ENCODE measurements at regions of chr11 and their contacts with region 1.

Region 1: DNA sequence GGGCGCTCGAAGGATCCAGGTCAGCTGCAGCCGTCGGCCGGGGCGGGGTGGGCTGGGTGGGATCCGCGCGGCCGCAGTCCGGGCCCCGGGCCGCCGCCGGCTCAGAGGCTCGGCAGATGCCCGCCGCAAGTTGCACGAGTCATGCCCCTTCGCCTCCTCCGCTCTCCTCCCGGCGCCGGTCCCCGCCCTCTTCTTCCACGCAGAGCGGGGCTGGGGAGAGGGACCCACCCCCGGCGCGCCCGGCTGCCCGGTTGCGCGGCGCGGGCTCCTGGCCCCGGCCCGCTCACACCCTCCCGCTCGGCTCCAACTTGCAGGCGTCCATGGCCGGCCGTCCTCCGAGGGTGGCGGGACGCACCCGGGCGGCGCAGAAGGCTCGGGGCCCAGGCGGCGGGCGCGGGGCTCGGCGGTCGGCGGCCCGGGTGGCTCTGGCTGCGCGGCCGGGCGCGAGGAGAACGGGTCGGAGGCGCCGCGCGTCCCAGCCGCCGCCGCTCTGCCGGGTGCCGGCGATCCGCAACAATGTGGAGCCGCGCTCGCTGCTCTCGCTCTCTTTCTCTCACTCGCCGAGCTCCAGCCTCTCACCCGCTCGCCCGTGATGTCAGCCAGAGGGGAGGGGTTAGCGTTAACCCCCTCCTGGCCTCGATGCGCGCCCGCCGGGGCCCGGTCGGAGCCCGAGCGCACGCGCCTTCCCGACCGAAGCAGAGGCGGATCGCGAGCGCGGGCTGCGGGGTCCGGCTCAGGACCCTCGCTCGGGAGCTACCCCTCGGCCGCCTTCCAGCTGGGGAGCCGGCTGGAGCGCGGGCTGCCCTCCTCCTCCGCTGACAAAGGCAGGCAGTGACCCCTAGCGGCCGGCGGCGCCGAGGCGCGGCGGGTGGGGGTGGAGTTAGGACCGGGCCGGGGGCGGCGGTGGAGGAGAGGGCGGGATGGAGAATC is at the start of gene NECTIN1:
- DNase-seq: peak; percentile 89
- H3K4me3 ChIP-seq: peak within 1 kb of the TSS; percentile 53 to 68 (median 65)
- H3K27ac ChIP-seq: peak within 1 kb of the TSS; percentile 40
- H3K4me1 ChIP-seq: peaks cover 35% of the 10 kb centered on the region
- H3K27me3 ChIP-seq: no peaks in the 10 kb centered on the region
- CTCF ChIP-seq: peak; percentile 87 to 91
- POLR2A ChIP-seq: peak; percentile 84
- total RNA-seq, gene NECTIN1: 23.6 and 23.9 TPM in 2 replicates

Region 2: DNA sequence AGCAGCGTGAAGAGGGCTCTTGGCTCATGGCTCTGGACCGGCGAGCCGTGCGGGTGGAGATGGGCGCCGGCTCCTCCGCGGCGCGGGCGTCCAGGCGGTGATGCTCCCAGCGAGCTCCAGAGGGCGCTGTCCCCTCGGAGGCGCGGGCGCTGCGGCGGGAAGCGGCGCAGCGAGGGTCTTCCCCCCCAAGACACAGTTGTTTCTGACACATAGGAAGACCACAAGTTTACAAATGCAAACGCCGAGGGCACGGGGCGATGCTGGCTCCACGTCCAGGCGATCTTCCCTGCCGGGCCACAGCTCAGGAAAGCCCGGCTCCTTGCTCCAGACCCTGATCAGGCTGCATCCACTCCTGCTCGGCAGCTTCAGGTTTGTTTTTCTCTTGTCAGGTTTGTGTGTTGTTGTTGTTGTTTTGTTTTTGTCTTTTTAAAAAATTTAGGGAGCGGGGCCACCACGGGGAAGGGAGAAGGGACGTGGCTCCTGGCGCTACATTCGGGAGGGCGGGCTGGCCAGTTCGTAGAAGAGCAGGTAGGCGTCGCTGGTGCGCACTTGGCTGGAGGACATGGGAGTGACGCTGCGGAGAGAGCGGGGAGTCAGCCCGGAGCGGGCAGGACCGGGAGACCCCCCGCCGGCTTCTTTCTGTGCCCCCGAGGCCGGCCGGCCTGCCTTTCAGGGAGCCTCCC is 372.4 kb before region 1 on chr11:
- CTCF ChIA-PET with region 1: interaction called, 3 read pairs
- POLR2A ChIA-PET with region 1: no interaction called
- dilution Hi-C with region 1: no loop called
- intact Hi-C with region 1: loop called (anchors 5 kb)
- DNase-seq: peak; percentile 67
- H3K4me3 ChIP-seq: peak overlapping the region; percentile 65 to 69 (median 67)
- H3K27ac ChIP-seq: peak overlapping the region; percentile 51
- H3K4me1 ChIP-seq: peaks cover 5% of the 10 kb centered on the region
- H3K27me3 ChIP-seq: no peaks in the 10 kb centered on the region
- CTCF ChIP-seq: peak; percentile 91 to 94
- POLR2A ChIP-seq: no peak

Region 3: DNA sequence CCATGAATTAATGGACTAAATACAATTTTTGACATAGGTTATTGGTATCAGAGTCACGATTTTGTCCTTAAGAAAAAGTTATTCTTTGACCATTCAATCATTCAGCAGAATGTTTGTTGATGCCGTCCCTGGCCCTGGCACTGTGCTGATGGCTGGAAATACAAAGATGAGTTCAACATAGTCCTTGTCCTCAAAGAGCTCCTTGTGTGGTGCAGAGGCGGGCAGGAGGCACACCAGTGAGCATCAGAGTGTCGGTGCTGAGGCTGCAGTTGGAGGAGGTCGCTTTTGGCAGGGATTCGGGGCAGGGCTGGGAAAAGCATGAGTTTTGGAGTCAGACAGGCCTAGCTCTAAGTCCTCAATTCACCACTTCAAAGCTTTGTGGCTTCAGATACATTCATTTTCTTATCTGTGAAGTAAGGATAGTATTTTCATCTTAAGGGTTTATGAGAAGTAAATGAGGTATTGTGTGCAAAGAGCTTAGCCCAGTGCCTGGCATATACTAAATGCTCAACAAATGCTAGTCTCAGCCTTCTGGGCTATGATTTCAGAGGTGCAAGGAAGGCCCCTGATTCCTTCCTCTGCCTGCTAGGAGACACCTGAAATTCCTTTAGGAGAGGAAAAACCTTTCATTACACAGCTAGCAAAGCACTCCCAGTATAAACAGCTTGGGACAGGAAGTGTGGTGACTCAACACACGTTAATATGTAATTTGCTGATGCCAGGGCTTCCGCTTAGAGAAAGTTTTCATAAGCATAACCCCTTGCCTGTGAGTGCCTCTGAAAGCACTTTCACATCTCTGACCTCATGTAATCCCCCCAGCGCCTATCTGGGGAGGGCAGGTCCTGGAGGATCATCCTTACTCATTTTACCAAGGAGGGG is 113.7 kb before region 1 on chr11:
- CTCF ChIA-PET with region 1: interaction called, 11 read pairs
- POLR2A ChIA-PET with region 1: no interaction called
- dilution Hi-C with region 1: no loop called
- intact Hi-C with region 1: no loop called
- DNase-seq: peak; percentile 88
- H3K4me3 ChIP-seq: no peak overlapping the region
- H3K27ac ChIP-seq: peak overlapping the region; percentile 89
- H3K4me1 ChIP-seq: peaks cover 44% of the 10 kb centered on the region
- H3K27me3 ChIP-seq: no peaks in the 10 kb centered on the region
- CTCF ChIP-seq: no peak
- POLR2A ChIP-seq: peak; percentile 53

Region 4: DNA sequence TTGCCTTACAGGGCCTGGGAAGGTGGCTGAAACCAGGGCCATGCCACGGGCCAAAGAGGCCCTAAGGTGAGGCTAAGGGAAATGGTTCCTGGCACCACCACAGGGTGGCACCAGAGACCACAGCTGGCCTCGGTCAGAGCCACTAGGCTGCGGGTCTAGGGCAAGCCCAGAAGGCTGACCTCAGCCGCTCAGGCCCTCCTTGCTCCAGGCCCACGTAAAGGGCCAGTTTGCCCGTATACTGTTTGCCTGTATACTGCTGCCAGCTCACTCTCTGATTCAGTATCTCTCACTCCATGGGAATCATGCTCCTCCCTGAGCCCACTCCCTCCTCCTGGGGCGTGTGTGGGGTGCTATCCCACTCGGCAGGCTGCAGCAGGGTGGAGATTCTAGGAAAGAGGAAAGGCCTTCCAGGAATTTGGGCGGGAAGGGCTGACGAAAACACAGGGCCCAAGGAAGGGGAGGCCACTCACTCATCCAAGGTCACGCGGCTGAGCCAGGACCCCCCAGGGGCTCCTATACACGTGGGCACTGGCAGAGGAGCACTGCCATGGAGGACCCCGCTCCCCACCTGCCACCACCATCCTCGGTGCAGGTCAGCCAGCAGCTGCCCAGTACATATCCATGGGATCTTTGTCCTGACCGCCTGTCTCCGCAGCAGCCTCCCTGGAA is 62.3 kb before region 1 on chr11:
- CTCF ChIA-PET with region 1: interaction called, 128 read pairs
- POLR2A ChIA-PET with region 1: interaction called, 5 read pairs
- dilution Hi-C with region 1: no loop called
- intact Hi-C with region 1: loop called (anchors 1 kb)
- DNase-seq: peak; percentile 65
- H3K4me3 ChIP-seq: no peak overlapping the region
- H3K27ac ChIP-seq: no peak overlapping the region
- H3K4me1 ChIP-seq: peaks cover 8% of the 10 kb centered on the region
- H3K27me3 ChIP-seq: no peaks in the 10 kb centered on the region
- CTCF ChIP-seq: peak; percentile 87 to 95
- POLR2A ChIP-seq: no peak

Region 5: GRCh38 chr11:119684361-119685110 is 44.4 kb before region 1 on chr11:
- CTCF ChIA-PET with region 1: interaction called, 37 read pairs
- POLR2A ChIA-PET with region 1: no interaction called
- dilution Hi-C with region 1: no loop called
- intact Hi-C with region 1: loop called (anchors 1 kb)
- DNase-seq: peak; percentile 65
- H3K4me3 ChIP-seq: no peak overlapping the region
- H3K27ac ChIP-seq: peak overlapping the region; percentile 84
- H3K4me1 ChIP-seq: peaks cover 17% of the 10 kb centered on the region
- H3K27me3 ChIP-seq: no peaks in the 10 kb centered on the region
- CTCF ChIP-seq: no peak
- POLR2A ChIP-seq: no peak

Region 6: GRCh38 chr11:119741369-119742262 is 12.7 kb after region 1 on chr11:
- CTCF ChIA-PET with region 1: interaction called, 43 read pairs
- POLR2A ChIA-PET with region 1: interaction called, 3 read pairs
- dilution Hi-C with region 1: no loop called
- intact Hi-C with region 1: loop called (anchors 1 kb)
- DNase-seq: peak; percentile 20
- H3K4me3 ChIP-seq: no peak overlapping the region
- H3K27ac ChIP-seq: no peak overlapping the region
- H3K4me1 ChIP-seq: no peaks in the 10 kb centered on the region
- H3K27me3 ChIP-seq: peaks cover 23 to 30% of the 10 kb centered on the region in 2 experiments
- CTCF ChIP-seq: peak; percentile 79 to 94
- POLR2A ChIP-seq: no peak

Region 7: GRCh38 chr11:119832202-119832935 is 103.5 kb after region 1 on chr11:
- CTCF ChIA-PET with region 1: no interaction called
- POLR2A ChIA-PET with region 1: no interaction called
- dilution Hi-C with region 1: no loop called
- intact Hi-C with region 1: no loop called
- DNase-seq: no peak
- H3K4me3 ChIP-seq: no peak overlapping the region
- H3K27ac ChIP-seq: no peak overlapping the region
- H3K4me1 ChIP-seq: no peaks in the 10 kb centered on the region
- H3K27me3 ChIP-seq: no peaks in the 10 kb centered on the region
- CTCF ChIP-seq: no peak
- POLR2A ChIP-seq: no peak

Region 8: GRCh38 chr11:120020981-120021380 is 292.1 kb after region 1 on chr11:
- CTCF ChIA-PET with region 1: no interaction called
- POLR2A ChIA-PET with region 1: no interaction called
- dilution Hi-C with region 1: no loop called
- intact Hi-C with region 1: no loop called
- DNase-seq: no peak
- H3K4me3 ChIP-seq: no peak overlapping the region
- H3K27ac ChIP-seq: no peak overlapping the region
- H3K4me1 ChIP-seq: no peaks in the 10 kb centered on the region
- H3K27me3 ChIP-seq: no peaks in the 10 kb centered on the region
- CTCF ChIP-seq: no peak
- POLR2A ChIP-seq: no peak

Region 9: GRCh38 chr11:120172054-120172911 is 443.4 kb after region 1 on chr11:
- CTCF ChIA-PET with region 1: interaction called, 11 read pairs
- POLR2A ChIA-PET with region 1: no interaction called
- dilution Hi-C with region 1: no loop called
- intact Hi-C with region 1: no loop called
- DNase-seq: peak; percentile 39
- H3K4me3 ChIP-seq: no peak overlapping the region
- H3K27ac ChIP-seq: no peak overlapping the region
- H3K4me1 ChIP-seq: peaks cover 7% of the 10 kb centered on the region
- H3K27me3 ChIP-seq: peaks cover 31 to 48% of the 10 kb centered on the region in 2 experiments
- CTCF ChIP-seq: peak; percentile 63 to 87
- POLR2A ChIP-seq: no peak